HEK293 (cell line): ENCODE measurements at regions of chr11 and their contacts with region 1.

Region 1: GRCh38 chr11:132312701-132313111 is 942.3 kb downstream of the NTM start:
- H3K4me3 ChIP-seq: no peak overlapping the region
- H3K27ac ChIP-seq: no peak overlapping the region
- H3K4me1 ChIP-seq: no peaks in the 10 kb centered on the region
- CTCF ChIP-seq: no peak

Region 2: GRCh38 chr11:132126973-132127899 is 185.5 kb before region 1 on chr11:
- CTCF ChIA-PET with region 1: no interaction called
- POLR2A ChIA-PET with region 1: no interaction called
- H3K4me3 ChIP-seq: no peak overlapping the region
- H3K27ac ChIP-seq: no peak overlapping the region
- H3K4me1 ChIP-seq: 0 out of 2 replicates have a peak, but pooled peaks cover 3% of the 10 kb centered on the region
- CTCF ChIP-seq: no peak

Region 3: GRCh38 chr11:132228746-132229325 is 83.9 kb before region 1 on chr11:
- CTCF ChIA-PET with region 1: no interaction called
- POLR2A ChIA-PET with region 1: no interaction called
- H3K4me3 ChIP-seq: no peak overlapping the region
- H3K27ac ChIP-seq: no peak overlapping the region
- H3K4me1 ChIP-seq: no peaks in the 10 kb centered on the region
- CTCF ChIP-seq: no peak

Region 4: DNA sequence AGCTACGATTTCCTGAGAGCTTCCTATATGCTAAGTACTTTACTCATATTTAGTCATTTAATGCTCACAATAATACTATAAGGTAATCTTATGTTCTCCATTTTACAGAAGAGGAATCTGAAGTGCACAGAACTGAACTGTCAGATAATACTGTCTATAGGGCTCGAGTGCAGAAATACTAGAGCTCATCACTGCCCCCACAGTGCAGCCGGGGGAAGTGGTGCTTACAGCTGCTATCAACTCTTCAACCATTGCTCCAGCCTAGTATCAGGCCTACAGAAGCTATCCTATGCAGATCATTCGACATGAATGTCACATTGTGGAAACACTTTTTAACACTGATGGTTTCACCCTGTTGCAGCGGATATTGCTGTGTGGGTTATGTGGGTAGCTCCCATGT is 12.4 kb before region 1 on chr11:
- CTCF ChIA-PET with region 1: interaction called, 60 read pairs
- POLR2A ChIA-PET with region 1: no interaction called
- H3K4me3 ChIP-seq: no peak overlapping the region
- H3K27ac ChIP-seq: no peak overlapping the region
- H3K4me1 ChIP-seq: no peaks in the 10 kb centered on the region
- CTCF ChIP-seq: no peak

Region 5: DNA sequence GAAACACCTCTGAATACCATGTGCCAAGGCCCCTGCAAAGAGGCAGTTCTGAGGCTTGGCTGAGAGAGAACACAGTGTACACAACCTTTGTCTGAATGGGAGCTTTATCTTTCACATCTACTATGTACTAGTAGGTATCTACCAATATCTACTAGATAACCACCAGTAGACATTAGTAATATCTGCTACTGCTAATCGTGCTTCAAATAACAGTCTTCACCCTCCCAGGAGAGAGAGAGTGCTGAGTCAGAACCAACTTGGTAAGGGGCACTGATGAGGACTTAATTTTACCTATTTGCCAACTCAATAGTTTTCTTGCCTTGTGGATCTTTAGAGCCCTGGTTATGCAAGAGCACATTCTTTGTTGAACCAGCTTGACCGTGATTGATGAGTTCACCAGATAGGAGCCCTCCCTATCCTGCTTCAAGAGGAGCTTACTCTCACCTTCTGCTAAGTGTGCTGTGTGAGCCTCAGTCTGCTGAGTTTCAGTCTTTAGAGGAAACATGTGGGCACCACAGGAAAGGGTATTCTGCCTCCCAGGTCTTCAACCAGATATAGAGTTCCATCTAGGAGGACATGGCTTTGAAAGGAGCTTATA is 25.2 kb after region 1 on chr11:
- CTCF ChIA-PET with region 1: no interaction called
- POLR2A ChIA-PET with region 1: no interaction called
- H3K4me3 ChIP-seq: no peak overlapping the region
- H3K27ac ChIP-seq: no peak overlapping the region
- H3K4me1 ChIP-seq: no peaks in the 10 kb centered on the region
- CTCF ChIP-seq: no peak